ENCODE measurements at regions of chr15 and their contacts with region 1.

Region 1: GRCh38 chr15:101240358-101240757 is 11.5 kb downstream of the CHSY1 start:
- DNase-seq: no peak

Region 2: GRCh38 chr15:101187820-101188636 is 52.3 kb before region 1 on chr15:
- intact Hi-C with region 1: loop called (anchors 2 kb)
- DNase-seq: no peak